A673 (cell line): ENCODE measurements at regions of chr22 and their contacts with region 1.

Region 1: DNA sequence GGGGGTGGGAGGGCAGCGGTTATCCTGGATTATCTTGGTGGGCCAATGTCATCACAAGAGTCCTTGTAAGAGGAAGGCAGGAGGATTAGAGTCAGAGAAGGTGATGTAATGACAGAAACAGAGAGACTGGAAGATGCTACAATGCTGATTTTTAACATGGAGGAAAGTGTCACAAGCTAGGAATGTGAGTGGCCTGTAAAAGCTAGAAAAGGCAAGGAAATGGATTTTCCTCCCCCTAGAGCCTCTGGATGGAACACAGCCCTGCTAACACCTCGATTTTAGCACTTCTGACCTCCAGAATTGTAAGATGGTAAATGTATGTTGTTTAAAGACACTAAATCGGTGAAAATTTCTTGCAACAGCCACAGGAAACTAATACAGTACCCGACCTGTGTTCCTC is 109.3 kb downstream of the MN1 start:
- DNase-seq: no peak
- H3K4me3 ChIP-seq: no peak overlapping the region
- H3K27ac ChIP-seq: no peak overlapping the region
- H3K4me1 ChIP-seq: no peaks in the 10 kb centered on the region
- H3K27me3 ChIP-seq: no peaks in the 10 kb centered on the region
- CTCF ChIP-seq: no peak

Region 2: DNA sequence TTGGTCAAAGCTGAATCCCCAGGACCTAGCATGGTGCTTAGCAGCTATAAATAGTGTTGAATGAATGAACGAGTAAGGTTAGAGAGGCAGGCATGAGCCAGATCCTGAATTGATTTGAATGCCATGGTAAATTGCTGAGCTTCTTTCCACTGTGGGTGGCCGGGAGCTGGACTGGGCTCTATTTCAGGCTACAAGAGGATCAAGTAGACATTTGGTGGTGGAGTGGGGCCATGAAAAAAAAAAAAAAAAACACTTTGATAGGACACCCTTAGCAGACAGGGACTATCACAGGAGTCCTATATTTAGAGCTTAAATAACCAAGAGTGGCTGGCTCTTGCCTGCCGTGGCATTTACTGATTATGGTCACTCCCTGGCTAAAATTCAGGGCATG is 957.2 kb before region 1 on chr22:
- CTCF ChIA-PET with region 1: interaction called, 14 read pairs
- POLR2A ChIA-PET with region 1: no interaction called
- intact Hi-C with region 1: no loop called
- DNase-seq: no peak
- H3K4me3 ChIP-seq: no peak overlapping the region
- H3K27ac ChIP-seq: no peak overlapping the region
- H3K4me1 ChIP-seq: no peaks in the 10 kb centered on the region
- H3K27me3 ChIP-seq: no peaks in the 10 kb centered on the region
- CTCF ChIP-seq: no peak

Region 3: DNA sequence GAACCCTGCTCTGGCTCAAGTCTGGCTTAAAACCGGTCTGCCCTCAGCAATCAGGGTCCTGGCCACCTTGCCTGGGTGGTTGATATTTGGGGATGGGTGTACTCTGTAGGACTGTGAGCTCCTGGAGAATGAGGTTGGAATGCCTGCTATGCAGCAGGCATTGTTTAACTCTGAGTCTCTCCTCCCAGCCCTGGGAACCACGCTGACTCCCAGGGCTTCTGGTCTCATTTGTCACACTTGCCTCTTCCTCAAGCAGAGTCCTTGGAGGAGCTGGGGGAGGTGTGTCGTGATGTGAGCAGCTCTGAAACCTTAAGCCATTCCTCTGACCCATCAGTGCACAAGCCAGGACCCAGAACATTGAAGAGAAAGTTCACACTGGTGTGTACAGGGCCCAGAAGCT is 230.8 kb before region 1 on chr22:
- CTCF ChIA-PET with region 1: no interaction called
- POLR2A ChIA-PET with region 1: no interaction called
- intact Hi-C with region 1: no loop called
- DNase-seq: no peak
- H3K4me3 ChIP-seq: no peak overlapping the region
- H3K27ac ChIP-seq: no peak overlapping the region
- H3K4me1 ChIP-seq: no peaks in the 10 kb centered on the region
- H3K27me3 ChIP-seq: no peaks in the 10 kb centered on the region
- CTCF ChIP-seq: no peak

Region 4: DNA sequence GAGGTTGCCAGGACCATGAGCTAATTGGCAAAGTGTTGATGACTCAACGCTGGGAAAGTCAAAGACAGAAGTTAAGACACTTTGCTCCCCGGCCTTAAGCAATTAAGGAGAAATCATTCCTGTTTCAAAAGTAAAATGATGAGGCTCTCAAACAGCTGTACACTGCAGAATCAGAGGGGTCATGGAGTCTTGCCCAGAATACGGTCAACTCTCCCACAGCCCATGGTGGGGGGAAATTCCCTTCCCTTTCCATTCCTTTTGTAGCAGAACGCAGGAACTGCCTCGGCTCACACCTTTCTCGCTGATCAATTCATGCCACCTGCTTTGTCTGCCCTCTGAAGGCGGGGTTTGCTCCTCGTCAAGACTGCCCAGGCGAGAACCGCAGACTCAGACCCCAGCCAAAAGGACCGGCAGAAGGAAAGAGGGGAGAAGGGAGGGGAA is 56.5 kb after region 1 on chr22:
- CTCF ChIA-PET with region 1: no interaction called
- POLR2A ChIA-PET with region 1: no interaction called
- intact Hi-C with region 1: no loop called
- DNase-seq: no peak
- H3K4me3 ChIP-seq: no peak overlapping the region
- H3K27ac ChIP-seq: no peak overlapping the region
- H3K4me1 ChIP-seq: peaks cover 25% of the 10 kb centered on the region
- H3K27me3 ChIP-seq: no peaks in the 10 kb centered on the region
- CTCF ChIP-seq: no peak